Aorta (tissue), 5 donors: ENCODE measurements at regions of chr5 and their contacts with region 1.

Region 1: DNA sequence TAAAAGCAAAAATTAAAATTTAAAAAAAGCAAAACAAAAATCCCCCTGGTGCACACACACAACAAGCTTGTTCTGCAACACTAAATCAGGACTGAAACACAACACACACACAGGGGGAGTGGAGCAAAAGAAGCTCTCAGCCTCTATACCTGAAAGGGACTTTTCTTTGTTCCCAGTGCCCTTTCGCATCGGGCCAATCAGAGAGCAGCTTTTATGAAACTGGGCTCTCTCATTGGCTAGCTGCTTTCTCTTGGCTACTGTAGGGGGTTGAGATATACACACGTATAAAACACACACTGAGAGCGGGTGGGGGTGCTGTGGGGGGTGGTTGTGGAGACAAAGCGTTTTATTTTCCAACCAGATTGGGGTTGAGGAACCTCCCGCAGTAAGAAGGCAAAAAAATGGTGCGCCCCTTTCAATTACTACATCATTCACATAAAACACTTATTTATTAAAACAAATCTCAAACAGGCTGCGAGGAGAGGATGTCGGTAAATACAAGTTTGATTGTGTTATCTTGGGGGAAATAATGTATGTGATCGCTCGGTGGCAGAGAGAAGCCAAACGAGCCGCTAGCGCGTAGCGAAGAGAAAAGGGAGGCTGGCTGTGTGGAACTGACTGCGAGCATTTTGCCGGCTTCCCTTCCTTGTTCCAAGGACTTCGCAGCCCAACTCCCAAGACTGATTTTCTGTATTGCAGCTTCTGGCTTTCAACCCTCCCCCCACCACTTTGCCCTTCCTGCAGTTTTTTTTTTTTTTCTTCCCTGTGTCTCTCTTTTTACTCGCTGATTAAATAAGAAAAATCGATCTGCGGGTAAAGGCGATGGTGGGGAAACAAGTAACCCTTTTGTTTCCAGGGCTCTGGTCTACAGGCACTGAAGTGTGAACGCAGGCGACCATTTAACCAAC is 2.5 kb upstream of the ZNF608 start:
- DNase-seq: peak in 1 of 2 donors; percentile 55
- ATAC-seq: peak; percentile 85
- H3K4me3 ChIP-seq: peak overlapping the region; percentile 70 to 94
- H3K27ac ChIP-seq: peak overlapping the region in 1 of 2 donors; percentile 62
- H3K4me1 ChIP-seq: no peaks in the 10 kb centered on the region
- H3K27me3 ChIP-seq: no peaks in the 10 kb centered on the region

Region 2: DNA sequence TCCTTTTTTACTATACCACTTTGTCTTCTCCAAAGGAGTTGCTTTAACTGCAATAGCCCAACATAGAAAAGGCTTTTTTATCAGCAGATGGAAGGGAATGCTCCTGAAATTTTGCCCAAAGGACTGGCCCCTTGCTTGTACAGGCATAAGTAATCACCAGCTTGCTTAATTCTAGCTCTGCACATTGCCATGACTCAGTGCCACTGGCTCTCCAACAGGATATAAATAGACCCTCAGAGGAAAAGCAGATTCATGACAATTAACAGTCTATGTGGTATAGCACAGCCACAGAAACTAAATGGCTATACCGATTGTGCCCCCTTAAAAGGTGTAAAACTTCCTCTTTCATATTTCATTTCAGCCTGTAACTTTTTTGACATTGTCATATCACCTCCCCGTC is 229.5 kb before region 1 on chr5:
- intact Hi-C with region 1: loop called in 1 of 2 experiments (anchors 10 kb)
- DNase-seq: peak in 1 of 2 donors; percentile 59
- ATAC-seq: peak; percentile 33
- H3K4me3 ChIP-seq: no peak overlapping the region
- H3K27ac ChIP-seq: no peak overlapping the region
- H3K4me1 ChIP-seq: peaks cover 2 to 5% of the 10 kb centered on the region in 2 donors
- H3K27me3 ChIP-seq: no peaks in the 10 kb centered on the region

Region 3: GRCh38 chr5:124649491-124650146 is 99.3 kb before region 1 on chr5:
- intact Hi-C with region 1: loop called (anchors 5 to 10 kb)
- DNase-seq: peak; percentile 86 to 91
- ATAC-seq: peak; percentile 57
- H3K4me3 ChIP-seq: no peak overlapping the region
- H3K27ac ChIP-seq: no peak overlapping the region
- H3K4me1 ChIP-seq: no peaks in the 10 kb centered on the region
- H3K27me3 ChIP-seq: no peaks in the 10 kb centered on the region

Region 4: DNA sequence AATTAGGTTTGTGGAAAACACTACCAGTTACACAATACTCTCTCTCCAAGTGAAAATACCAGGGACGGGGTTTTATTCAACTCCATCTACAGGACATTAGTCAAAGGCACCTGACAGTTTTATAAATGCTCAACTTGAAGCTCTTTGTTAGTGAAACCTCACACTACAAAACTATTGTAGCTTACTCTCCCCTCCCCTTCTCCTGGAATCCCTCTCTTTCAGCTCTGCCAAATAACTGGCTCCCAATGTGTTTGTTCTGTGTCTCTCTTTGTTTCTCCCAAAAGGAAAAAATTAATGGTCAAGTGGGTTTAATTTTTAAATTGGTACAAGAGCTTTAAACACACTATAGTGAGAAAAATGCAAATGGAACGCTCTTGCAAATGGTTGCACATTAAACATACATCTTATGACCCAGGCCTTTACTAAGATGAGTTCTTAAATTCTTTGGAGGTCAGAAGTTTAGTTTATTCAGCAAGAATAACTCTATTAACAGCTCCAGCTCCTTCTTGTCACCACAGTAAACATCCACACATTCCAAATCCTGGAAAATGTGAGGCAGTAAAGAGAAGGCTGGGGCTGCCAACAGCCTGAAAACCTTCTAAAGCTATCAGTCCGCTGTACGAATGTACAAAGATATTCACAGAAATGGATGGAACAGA is 50.9 kb before region 1 on chr5:
- intact Hi-C with region 1: loop called in 1 of 2 experiments (anchors 10 kb)
- DNase-seq: no peak
- ATAC-seq: peak; percentile 73
- H3K4me3 ChIP-seq: no peak overlapping the region
- H3K27ac ChIP-seq: peak overlapping the region; percentile 88 to 96
- H3K4me1 ChIP-seq: peaks cover 3 to 4% of the 10 kb centered on the region in 2 donors
- H3K27me3 ChIP-seq: no peaks in the 10 kb centered on the region

Region 5: GRCh38 chr5:124902097-124902821 is 153.3 kb after region 1 on chr5:
- intact Hi-C with region 1: loop called in 1 of 2 experiments (anchors 10 kb)
- DNase-seq: no peak
- ATAC-seq: no peak
- H3K4me3 ChIP-seq: no peak overlapping the region
- H3K27ac ChIP-seq: no peak overlapping the region
- H3K4me1 ChIP-seq: peaks cover 0 to 6% of the 10 kb centered on the region in 2 donors
- H3K27me3 ChIP-seq: no peaks in the 10 kb centered on the region